GM12878 (cell line): ENCODE measurements at regions of chr1 and their contacts with region 1.

Region 1: DNA sequence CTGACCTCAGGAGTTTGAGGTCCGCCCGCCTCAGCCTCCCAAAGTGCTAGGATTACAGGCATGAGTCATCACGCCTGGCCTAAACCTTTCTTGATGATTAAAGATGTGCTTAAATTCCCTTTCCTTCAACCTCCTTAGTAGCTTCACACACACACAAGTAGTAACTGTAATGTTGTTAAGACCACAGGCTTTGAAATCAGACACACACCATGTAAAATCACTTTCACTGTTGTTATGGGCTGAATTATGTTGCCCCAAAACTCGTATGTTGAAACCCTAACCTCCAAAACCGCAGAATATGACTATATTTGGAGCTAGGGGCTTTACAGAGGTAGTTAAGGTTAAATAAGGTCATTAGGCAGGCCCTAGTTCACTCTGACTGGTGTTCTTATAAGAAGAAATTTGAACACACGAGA is 180.2 kb downstream of the NR5A2 start:
- DNase-seq: peak; percentile 77
- ATAC-seq: peak; percentile 97
- H3K4me3 ChIP-seq: no peak overlapping the region
- H3K27ac ChIP-seq: no peak overlapping the region
- H3K4me1 ChIP-seq: peaks cover 7% of the 10 kb centered on the region
- H3K27me3 ChIP-seq: no peaks in the 10 kb centered on the region
- CTCF ChIP-seq: no peak
- EP300 ChIP-seq: peak; percentile 68 to 82; a peak in 3 of 4 replicates
- POLR2A ChIP-seq: no peak
- RAD21 ChIP-seq: 0 out of 2 replicates have a peak, but pooled peaks have one; percentile 1

Region 2: GRCh38 chr1:199733125-199733524 is 474.6 kb before region 1 on chr1:
- CTCF ChIA-PET with region 1: no interaction called
- POLR2A ChIA-PET with region 1: no interaction called
- RAD21 ChIA-PET with region 1: no interaction called
- SMC1A ChIA-PET with region 1: no interaction called
- in situ Hi-C with region 1: no loop called
- intact Hi-C with region 1: no loop called
- DNase-seq: no peak
- ATAC-seq: no peak
- H3K4me3 ChIP-seq: no peak overlapping the region
- H3K27ac ChIP-seq: no peak overlapping the region
- H3K4me1 ChIP-seq: no peaks in the 10 kb centered on the region
- H3K27me3 ChIP-seq: no peaks in the 10 kb centered on the region
- CTCF ChIP-seq: no peak
- EP300 ChIP-seq: no peak
- POLR2A ChIP-seq: no peak
- RAD21 ChIP-seq: no peak

Region 3: DNA sequence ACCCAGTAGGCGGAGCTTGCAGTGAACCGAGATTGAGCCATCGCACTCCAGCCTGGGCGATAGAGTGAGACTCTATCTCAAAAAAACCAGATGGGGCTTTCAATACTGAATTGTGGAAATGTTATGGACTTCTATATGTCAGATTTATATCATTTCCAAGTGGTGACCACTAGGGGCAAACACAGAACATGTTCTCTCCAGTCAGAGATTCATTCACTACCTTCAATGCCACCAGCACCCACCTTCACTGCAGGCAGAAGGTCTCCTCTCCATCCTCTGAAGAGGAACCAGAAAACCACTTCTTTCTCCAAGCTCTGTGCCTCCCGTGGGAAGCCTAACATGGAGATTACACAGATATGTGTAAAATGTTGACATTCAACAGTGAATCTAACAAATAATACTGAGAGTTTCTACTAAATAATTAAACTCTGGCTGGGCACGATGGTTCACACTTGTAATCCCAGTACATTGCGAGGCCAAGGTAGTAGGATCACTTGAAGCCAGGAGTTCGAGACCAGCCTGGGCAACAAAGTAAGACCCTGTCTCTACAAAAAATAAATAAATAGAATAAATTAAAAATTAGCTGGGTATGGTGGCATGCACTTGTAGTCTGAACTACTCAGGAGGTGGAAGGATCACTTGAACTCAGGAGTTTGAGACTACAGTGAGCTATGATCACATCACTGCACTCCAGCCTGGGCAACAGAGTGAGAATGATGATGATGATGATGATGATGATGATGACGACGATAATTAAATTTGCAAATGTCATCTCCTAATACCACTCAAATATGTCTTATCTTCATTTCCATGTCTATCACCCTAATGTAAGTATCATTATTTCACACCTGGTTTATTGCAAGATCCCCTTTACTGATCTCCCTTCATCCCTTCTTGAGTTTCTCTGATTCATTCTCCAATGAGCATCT is 51.0 kb after region 1 on chr1:
- CTCF ChIA-PET with region 1: no interaction called
- POLR2A ChIA-PET with region 1: no interaction called
- RAD21 ChIA-PET with region 1: no interaction called
- SMC1A ChIA-PET with region 1: interaction called, 4 read pairs
- in situ Hi-C with region 1: no loop called
- intact Hi-C with region 1: loop called (anchors 2 kb)
- DNase-seq: no peak
- ATAC-seq: peak; percentile 74
- H3K4me3 ChIP-seq: no peak overlapping the region
- H3K27ac ChIP-seq: no peak overlapping the region
- H3K4me1 ChIP-seq: peaks cover 4% of the 10 kb centered on the region; the same call in 1 of the 2 replicates
- H3K27me3 ChIP-seq: no peaks in the 10 kb centered on the region
- CTCF ChIP-seq: peak; percentile 40 to 54 (median 54); a peak in 4 of 6 replicates
- EP300 ChIP-seq: no peak
- POLR2A ChIP-seq: no peak
- RAD21 ChIP-seq: peak; percentile 52